Activated CD8-positive, alpha-beta T cell treated with anti-CD3 and anti-CD28 coated beads for 36 hours (primary cell): ENCODE measurements at regions of chr3 and their contacts with region 1.

Region 1: GRCh38 chr3:56339671-56340070 is 128.6 kb downstream of the ERC2 start:
- DNase-seq: no peak
- ATAC-seq: no peak
- H3K4me3 Mint-ChIP-seq: no peak overlapping the region
- H3K27ac Mint-ChIP-seq: no peak overlapping the region
- H3K4me1 Mint-ChIP-seq: no peaks in the 10 kb centered on the region
- H3K27me3 Mint-ChIP-seq: peaks cover 8% of the 10 kb centered on the region
- CTCF ChIP-seq: no peak

Region 2: GRCh38 chr3:56323986-56324420 is 15.7 kb before region 1 on chr3:
- CTCF ChIA-PET with region 1: interaction called, 13 read pairs
- POLR2A ChIA-PET with region 1: no interaction called
- intact Hi-C with region 1: no loop called
- DNase-seq: no peak
- ATAC-seq: no peak
- H3K4me3 Mint-ChIP-seq: no peak overlapping the region
- H3K27ac Mint-ChIP-seq: no peak overlapping the region
- H3K4me1 Mint-ChIP-seq: no peaks in the 10 kb centered on the region
- H3K27me3 Mint-ChIP-seq: peaks cover 9% of the 10 kb centered on the region
- CTCF ChIP-seq: no peak

Region 3: GRCh38 chr3:56443372-56443771 is 103.7 kb after region 1 on chr3:
- CTCF ChIA-PET with region 1: interaction called, 4 read pairs
- POLR2A ChIA-PET with region 1: no interaction called
- intact Hi-C with region 1: loop called (anchors 2 kb)
- DNase-seq: no peak
- ATAC-seq: no peak
- H3K4me3 Mint-ChIP-seq: no peak overlapping the region
- H3K27ac Mint-ChIP-seq: no peak overlapping the region
- H3K4me1 Mint-ChIP-seq: no peaks in the 10 kb centered on the region
- H3K27me3 Mint-ChIP-seq: peaks cover 6% of the 10 kb centered on the region
- CTCF ChIP-seq: no peak

Region 4: DNA sequence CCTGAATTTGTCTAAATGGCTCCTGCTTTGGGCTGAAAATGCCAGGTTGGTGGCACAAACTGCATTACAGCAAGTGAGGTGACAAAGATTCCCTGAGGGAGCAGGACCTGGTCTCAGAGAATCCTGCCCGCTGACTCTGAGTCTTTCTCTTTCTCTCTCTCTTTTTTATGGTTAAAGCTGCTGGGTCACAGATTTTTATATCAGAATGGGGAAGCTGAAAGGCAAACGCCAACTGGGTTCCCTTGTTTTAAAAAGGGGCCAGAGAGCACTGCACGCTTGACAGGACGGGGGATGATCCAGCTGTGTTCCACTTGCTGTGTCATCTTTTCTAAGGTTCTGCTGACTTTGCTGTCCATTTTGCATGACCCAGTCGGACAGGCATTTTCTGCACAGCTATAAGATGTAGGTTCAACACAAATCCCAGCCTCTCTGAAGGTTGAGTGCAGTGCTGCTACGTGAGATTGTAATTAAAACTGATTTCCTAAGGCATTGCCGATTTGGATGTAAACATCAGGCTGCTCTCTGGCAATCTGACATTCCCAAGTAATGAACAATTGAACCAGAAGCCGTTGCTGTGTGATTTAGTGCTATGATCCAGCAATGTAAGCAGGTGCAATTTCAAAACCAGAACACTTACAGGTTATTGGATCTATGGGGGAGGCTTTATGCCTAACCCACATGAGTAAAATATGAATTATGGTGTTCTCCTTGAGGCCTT is 436.3 kb after region 1 on chr3:
- CTCF ChIA-PET with region 1: no interaction called
- POLR2A ChIA-PET with region 1: no interaction called
- intact Hi-C with region 1: no loop called
- DNase-seq: no peak
- ATAC-seq: no peak
- H3K4me3 Mint-ChIP-seq: peak overlapping the region; percentile 22
- H3K27ac Mint-ChIP-seq: peak overlapping the region; percentile 79
- H3K4me1 Mint-ChIP-seq: peaks cover 87% of the 10 kb centered on the region
- H3K27me3 Mint-ChIP-seq: no peaks in the 10 kb centered on the region
- CTCF ChIP-seq: no peak